AG04449 (cell line): ENCODE measurements at regions of chr7 and their contacts with region 1.

Region 1: GRCh38 chr7:36366718-36367560 is 22.7 kb upstream of the ANLN start:
- DNase-seq: no peak
- H3K4me3 ChIP-seq: peak overlapping the region; percentile 88
- CTCF ChIP-seq: peak; percentile 87

Region 2: DNA sequence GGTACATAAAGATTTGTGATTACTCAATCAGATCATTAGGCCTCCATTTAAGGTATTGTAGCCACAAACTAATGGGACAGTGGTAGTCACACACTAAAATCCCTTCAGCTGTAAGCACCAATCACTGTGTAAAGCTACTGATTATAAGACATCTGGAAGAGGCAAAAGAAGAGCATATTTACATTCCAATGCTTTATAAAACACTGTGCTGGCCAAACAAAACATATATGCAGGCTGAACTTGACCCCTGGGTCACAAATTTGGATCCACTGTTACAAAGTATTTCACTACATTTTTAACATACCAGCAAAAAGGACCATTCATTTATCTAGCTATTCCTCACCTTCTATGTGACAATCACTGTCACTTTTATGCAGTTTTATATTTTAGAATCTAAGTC is 18.7 kb before region 1 on chr7:
- CTCF ChIA-PET with region 1: interaction called, 15 read pairs
- POLR2A ChIA-PET with region 1: interaction called, 3 read pairs
- DNase-seq: peak; percentile 69
- H3K4me3 ChIP-seq: no peak overlapping the region
- CTCF ChIP-seq: no peak

Region 3: DNA sequence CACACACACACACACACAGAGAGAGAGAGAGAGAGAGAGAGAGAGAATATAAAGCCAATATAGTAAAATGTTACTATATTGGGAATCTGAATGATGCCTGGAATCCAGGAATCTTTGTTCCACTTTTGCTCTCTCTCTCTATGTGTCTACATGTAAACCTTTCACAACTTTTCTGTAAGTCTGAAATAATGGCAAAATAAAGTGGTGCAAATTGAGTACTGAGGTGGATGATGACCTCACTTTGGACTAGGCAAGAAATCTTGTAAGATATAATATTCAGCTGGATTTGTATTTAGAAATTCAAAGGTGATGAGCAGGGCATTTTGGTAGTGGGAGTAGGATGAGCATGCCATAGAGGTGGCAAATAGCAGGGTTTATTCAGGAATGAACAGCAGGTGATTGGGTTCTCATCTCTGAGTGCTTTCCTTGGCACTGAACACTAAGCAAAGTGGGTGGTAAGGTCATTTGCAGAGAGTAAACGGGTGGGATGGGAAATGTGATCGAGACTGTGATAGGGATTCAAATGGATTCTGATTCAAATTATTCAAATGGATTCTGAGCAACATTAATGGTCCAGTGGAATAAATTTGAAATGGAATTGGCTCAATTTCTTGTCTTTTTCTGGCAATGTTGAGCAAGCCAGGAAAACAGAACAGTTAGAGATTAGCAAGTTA is 13.0 kb after region 1 on chr7:
- CTCF ChIA-PET with region 1: interaction called, 19 read pairs
- POLR2A ChIA-PET with region 1: no interaction called
- DNase-seq: no peak
- H3K4me3 ChIP-seq: no peak overlapping the region
- CTCF ChIP-seq: no peak

Region 4: DNA sequence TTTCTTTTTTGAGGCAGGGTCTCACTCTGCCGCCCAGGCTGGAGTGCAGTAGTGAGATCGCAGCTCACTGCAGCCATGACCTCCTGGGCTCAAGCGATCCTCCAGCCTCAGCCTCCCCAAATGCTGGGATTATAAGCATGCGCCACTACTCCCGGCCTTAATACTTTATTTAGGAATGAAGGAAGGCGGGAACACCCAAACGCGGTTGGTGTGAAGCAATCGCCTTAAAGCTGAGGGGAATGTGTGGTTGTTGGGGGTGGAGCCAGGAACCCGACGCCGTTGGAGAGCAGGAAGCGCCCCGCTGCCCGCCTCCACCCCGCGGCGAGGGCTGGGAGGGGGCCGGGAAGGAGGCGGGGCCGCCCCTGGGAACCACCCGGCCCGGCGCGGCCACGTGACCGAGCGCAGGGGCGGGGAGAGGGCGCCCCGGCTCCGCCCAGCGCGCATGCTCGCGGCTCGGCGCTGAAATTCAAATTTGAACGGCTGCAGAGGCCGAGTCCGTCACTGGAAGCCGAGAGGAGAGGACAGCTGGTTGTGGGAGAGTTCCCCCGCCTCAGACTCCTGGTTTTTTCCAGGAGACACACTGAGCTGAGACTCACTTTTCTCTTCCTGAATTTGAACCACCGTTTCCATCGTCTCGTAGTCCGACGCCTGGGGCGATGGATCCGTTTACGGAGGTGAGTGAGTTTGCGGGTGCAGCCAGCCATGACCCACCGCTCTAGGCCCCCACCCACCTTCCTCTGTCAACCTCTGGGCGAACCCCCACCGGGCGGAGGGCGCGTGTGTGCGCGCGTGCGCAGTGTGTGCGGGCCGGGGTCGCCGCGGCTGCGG is 22.6 kb after region 1 on chr7 and contains the start of gene ANLN:
- CTCF ChIA-PET with region 1: interaction called, 17 read pairs
- POLR2A ChIA-PET with region 1: no interaction called
- DNase-seq: peak; percentile 67
- H3K4me3 ChIP-seq: peak within 1 kb of the TSS; percentile 83
- CTCF ChIP-seq: no peak